Dendritic cell treated with granulocyte-macrophage colony-stimulating factor and Interleukin-4, amounts not matched to agents 40 ng/mL and 50 ng/mL, for 4 days (primary cell): ENCODE measurements at regions of chr3 and their contacts with region 1.

Region 1: GRCh38 chr3:16600780-16601539 is 4.3 kb downstream of the DAZL start:
- H3K4me3 Mint-ChIP-seq: no peak overlapping the region
- H3K27ac Mint-ChIP-seq: no peak overlapping the region
- H3K4me1 Mint-ChIP-seq: no peaks in the 10 kb centered on the region
- H3K27me3 Mint-ChIP-seq: peaks cover 7% of the 10 kb centered on the region

Region 2: DNA sequence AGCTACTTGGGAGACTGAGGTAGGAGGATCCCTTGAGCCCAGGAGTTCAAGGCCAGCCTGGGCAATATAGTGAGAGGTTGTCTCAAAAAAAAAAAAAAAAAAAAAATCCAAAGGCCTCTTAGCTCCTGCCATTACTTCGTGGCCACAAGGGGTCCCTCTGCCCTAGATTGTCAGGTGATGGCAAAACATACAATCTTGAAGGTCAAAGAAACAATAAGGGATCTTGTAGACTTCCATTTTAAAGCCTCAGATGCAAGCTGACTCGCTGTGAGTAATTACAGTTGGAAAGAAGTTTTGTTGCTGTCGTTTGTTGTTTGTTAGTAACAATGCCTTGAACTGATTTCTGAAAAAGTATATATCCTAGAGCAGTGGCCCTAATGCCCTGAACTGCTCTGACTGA is 227.9 kb after region 1 on chr3:
- intact Hi-C with region 1: loop called (anchors 2 kb)
- H3K4me3 Mint-ChIP-seq: no peak overlapping the region
- H3K27ac Mint-ChIP-seq: no peak overlapping the region
- H3K4me1 Mint-ChIP-seq: no peaks in the 10 kb centered on the region
- H3K27me3 Mint-ChIP-seq: no peaks in the 10 kb centered on the region

Region 3: DNA sequence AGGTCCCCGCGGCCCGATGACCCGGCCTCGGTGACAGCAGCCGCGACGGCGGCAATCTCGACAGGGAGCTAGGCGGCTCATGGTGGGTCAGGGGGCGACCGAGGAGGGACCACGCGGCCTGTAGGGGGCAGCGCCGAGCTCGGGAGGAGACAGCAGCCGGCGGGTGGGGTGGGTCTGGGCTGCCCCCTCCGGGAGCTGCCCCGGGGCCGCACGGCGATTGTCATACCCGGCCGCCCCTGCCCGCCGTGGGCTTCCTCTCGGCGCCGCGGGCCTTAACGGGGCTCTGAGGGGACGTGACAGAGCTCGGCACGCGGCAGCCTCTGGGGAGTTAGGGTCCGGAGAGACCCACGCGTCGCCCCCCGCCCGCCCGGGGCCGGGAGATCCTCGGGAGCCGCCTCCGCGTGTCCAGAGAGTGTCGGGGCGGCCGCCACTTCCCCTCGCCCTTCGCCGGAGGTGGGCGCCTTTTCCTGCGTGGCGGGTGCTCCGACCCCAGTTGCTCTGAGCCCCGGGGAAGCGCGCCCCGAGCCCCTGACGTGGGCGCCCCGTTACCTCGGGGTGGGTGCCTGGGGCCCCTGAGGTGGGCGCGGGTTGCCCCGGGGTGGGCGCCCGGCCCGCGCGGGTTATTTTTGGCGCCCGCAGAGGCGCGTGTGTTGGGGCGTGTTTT is 283.3 kb after region 1 on chr3:
- intact Hi-C with region 1: loop called (anchors 10 kb)
- H3K4me3 Mint-ChIP-seq: peak overlapping the region; percentile 93
- H3K27ac Mint-ChIP-seq: peak overlapping the region; percentile 84
- H3K4me1 Mint-ChIP-seq: peaks cover 57% of the 10 kb centered on the region
- H3K27me3 Mint-ChIP-seq: no peaks in the 10 kb centered on the region

Region 4: DNA sequence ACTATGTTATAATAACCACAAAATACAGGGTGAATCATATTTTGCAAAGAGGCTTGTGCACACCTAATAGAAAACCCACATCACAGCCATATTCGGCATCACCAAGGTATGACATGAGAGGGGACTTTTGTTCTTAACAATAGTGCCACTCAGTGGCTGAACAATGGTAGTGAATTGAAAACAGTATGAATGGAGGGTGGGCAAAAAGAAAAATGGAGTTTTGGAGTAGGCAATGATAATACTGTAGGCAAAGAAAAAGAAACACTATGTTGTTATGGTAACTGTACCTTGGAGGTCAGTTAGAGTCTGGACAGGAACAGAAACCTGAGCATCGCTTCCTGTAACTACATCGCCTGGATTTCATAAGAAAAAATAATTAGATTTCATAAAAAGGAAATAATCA is 632.4 kb after region 1 on chr3:
- intact Hi-C with region 1: loop called (anchors 1 kb)
- H3K4me3 Mint-ChIP-seq: no peak overlapping the region
- H3K27ac Mint-ChIP-seq: no peak overlapping the region
- H3K4me1 Mint-ChIP-seq: peaks cover 5% of the 10 kb centered on the region
- H3K27me3 Mint-ChIP-seq: no peaks in the 10 kb centered on the region

Region 5: GRCh38 chr3:17412950-17413530 is 812.1 kb after region 1 on chr3:
- intact Hi-C with region 1: loop called (anchors 5 kb)
- H3K4me3 Mint-ChIP-seq: no peak overlapping the region
- H3K27ac Mint-ChIP-seq: no peak overlapping the region
- H3K4me1 Mint-ChIP-seq: no peaks in the 10 kb centered on the region
- H3K27me3 Mint-ChIP-seq: no peaks in the 10 kb centered on the region